ENCODE measurements at regions of chr2 and their contacts with region 1.

Region 1: GRCh38 chr2:20539133-20539719 is 92.4 kb downstream of the RHOB start:
- DNase-seq: peak; percentile 67
- ATAC-seq: peak; percentile 1
- H3K4me3 ChIP-seq: peak overlapping the region in 1 of 3 experiments; percentile 59; a peak in 1 of 6 replicates
- H3K27ac ChIP-seq: peak overlapping the region; percentile 97
- H3K4me1 ChIP-seq: peaks cover 82% of the 10 kb centered on the region
- H3K27me3 ChIP-seq: no peaks in the 10 kb centered on the region
- CTCF ChIP-seq: no peak
- EP300 ChIP-seq: no peak
- POLR2A ChIP-seq: no peak
- RAD21 ChIP-seq: no peak

Region 2: GRCh38 chr2:20507166-20507692 is 32.0 kb before region 1 on chr2:
- CTCF ChIA-PET with region 1: no interaction called
- POLR2A ChIA-PET with region 1: interaction called, 21 read pairs
- in situ Hi-C with region 1: no loop called
- intact Hi-C with region 1: no loop called
- DNase-seq: no peak
- ATAC-seq: peak; percentile 55
- H3K4me3 ChIP-seq: no peak overlapping the region
- H3K27ac ChIP-seq: peak overlapping the region; percentile 14
- H3K4me1 ChIP-seq: peaks cover 71% of the 10 kb centered on the region
- H3K27me3 ChIP-seq: no peaks in the 10 kb centered on the region
- CTCF ChIP-seq: no peak
- EP300 ChIP-seq: no peak
- POLR2A ChIP-seq: no peak
- RAD21 ChIP-seq: no peak

Region 3: GRCh38 chr2:20561701-20562454 is 22.7 kb after region 1 on chr2:
- CTCF ChIA-PET with region 1: no interaction called
- POLR2A ChIA-PET with region 1: interaction called, 10 read pairs
- in situ Hi-C with region 1: no loop called
- intact Hi-C with region 1: no loop called
- DNase-seq: no peak
- ATAC-seq: no peak
- H3K4me3 ChIP-seq: no peak overlapping the region
- H3K27ac ChIP-seq: no peak overlapping the region
- H3K4me1 ChIP-seq: peaks cover 55% of the 10 kb centered on the region
- H3K27me3 ChIP-seq: no peaks in the 10 kb centered on the region
- CTCF ChIP-seq: no peak
- EP300 ChIP-seq: no peak
- POLR2A ChIP-seq: no peak
- RAD21 ChIP-seq: no peak

Region 4: GRCh38 chr2:20584637-20585321 is 45.6 kb after region 1 on chr2:
- CTCF ChIA-PET with region 1: no interaction called
- POLR2A ChIA-PET with region 1: interaction called, 215 read pairs
- in situ Hi-C with region 1: no loop called
- intact Hi-C with region 1: loop called (anchors 1 kb)
- DNase-seq: peak; percentile 98
- ATAC-seq: peak; percentile 79
- H3K4me3 ChIP-seq: peak overlapping the region in 1 of 3 experiments; percentile 52; a peak in 2 of 6 replicates
- H3K27ac ChIP-seq: peak overlapping the region; percentile 97
- H3K4me1 ChIP-seq: peaks cover 100% of the 10 kb centered on the region
- H3K27me3 ChIP-seq: no peaks in the 10 kb centered on the region
- CTCF ChIP-seq: peak; percentile 41; the same call in 1 of the 2 replicates
- EP300 ChIP-seq: peak; percentile 63 to 88; a peak in 3 of 4 replicates
- POLR2A ChIP-seq: peak in 1 of 2 experiments; percentile 73; a peak in 1 of 4 replicates
- RAD21 ChIP-seq: peak; percentile 58

Region 5: DNA sequence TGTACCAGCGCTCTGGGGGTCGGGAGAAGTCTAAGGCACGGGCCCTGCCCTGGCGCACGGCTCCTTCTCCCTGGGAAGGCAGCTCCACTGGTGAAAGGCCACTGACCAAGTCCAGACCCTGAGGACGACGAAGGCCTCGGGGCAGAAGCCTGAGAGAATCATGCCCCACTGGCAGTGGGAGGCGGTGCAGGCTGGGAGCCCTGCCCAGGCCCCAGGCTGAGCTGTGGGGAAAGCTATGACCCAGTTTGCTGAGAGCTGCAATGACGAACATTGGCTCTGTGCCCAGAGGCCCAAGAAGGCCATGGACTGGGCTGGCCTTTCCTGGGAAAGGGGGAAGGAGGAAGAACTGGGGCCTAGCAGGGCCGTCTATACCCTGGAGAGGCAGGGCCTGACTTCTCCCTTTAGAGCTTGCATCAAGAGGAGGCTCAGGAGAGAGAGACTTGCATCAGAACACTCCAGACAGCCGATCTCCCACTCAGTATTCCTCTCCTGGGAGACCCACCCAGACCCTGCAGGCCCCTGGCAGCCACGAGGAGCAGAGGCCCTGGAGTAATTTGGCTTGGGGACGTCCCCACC is 78.8 kb after region 1 on chr2:
- CTCF ChIA-PET with region 1: no interaction called
- POLR2A ChIA-PET with region 1: interaction called, 21 read pairs
- in situ Hi-C with region 1: no loop called
- intact Hi-C with region 1: no loop called
- DNase-seq: peak; percentile 94
- ATAC-seq: peak; percentile 92
- H3K4me3 ChIP-seq: no peak overlapping the region
- H3K27ac ChIP-seq: peak overlapping the region; percentile 95
- H3K4me1 ChIP-seq: peaks cover 63% of the 10 kb centered on the region
- H3K27me3 ChIP-seq: no peaks in the 10 kb centered on the region
- CTCF ChIP-seq: peak; percentile 60
- EP300 ChIP-seq: peak; percentile 49 to 56; a peak in 2 of 4 replicates
- POLR2A ChIP-seq: peak in 1 of 2 experiments; percentile 53; a peak in 1 of 4 replicates
- RAD21 ChIP-seq: peak; percentile 92

Region 6: GRCh38 chr2:20642055-20642971 is 103.1 kb after region 1 on chr2:
- CTCF ChIA-PET with region 1: no interaction called
- POLR2A ChIA-PET with region 1: no interaction called
- in situ Hi-C with region 1: no loop called
- intact Hi-C with region 1: no loop called
- DNase-seq: peak; percentile 64
- ATAC-seq: peak; percentile 98
- H3K4me3 ChIP-seq: no peak overlapping the region
- H3K27ac ChIP-seq: no peak overlapping the region
- H3K4me1 ChIP-seq: peaks cover 7% of the 10 kb centered on the region
- H3K27me3 ChIP-seq: no peaks in the 10 kb centered on the region
- CTCF ChIP-seq: peak; percentile 99
- EP300 ChIP-seq: peak in 1 of 2 experiments; percentile 49; a peak in 1 of 4 replicates
- POLR2A ChIP-seq: no peak
- RAD21 ChIP-seq: peak; percentile 100

Region 7: DNA sequence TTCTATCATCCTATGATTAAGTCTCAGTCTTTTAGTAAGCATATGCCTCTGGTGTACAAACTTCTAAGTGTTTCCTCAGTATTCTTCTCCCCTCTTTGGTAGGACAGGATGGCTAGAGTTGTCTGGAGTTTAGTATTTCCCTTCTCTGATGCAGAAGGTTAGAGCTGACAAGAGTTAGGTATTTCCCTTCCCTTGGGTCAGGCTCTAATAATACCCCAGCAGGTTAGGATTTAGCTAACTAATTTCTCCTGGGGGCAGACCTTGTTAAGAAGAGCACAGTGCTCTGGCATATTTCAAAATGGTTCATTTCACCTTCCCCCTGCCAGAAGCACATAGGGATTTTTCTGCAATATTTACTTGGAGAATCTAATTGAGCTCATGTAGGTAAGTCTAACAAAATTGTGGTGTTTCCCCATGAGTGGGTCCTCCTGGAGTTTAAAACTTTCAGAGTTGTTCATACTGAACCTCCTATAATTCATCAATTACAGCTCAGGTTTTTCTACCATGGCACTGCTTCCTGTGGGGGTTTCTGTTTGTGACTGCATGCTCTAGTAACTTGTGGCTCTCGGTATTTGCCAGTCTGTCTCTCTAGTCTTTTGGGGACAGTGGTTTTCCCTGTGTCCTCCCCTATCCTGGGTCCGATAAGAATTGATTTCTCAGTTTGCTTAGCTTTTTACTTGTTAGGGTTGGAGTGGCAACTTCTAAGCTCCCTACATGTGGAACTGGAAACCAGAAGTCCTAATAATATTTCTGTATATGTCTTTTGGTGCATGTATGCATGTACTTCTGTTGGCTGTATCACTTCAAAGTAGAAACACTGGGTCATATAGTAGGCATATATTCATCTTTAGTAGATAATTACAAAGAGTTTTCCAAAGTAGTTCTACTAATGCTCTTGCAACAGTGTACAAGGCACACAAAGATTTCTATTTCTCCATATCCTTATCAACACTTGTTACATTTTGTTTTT is 205.4 kb after region 1 on chr2:
- CTCF ChIA-PET with region 1: no interaction called
- POLR2A ChIA-PET with region 1: no interaction called
- in situ Hi-C with region 1: no loop called
- intact Hi-C with region 1: no loop called
- DNase-seq: no peak
- ATAC-seq: no peak
- H3K4me3 ChIP-seq: no peak overlapping the region
- H3K27ac ChIP-seq: no peak overlapping the region
- H3K4me1 ChIP-seq: peaks cover 11% of the 10 kb centered on the region
- H3K27me3 ChIP-seq: no peaks in the 10 kb centered on the region
- CTCF ChIP-seq: no peak
- EP300 ChIP-seq: no peak
- POLR2A ChIP-seq: no peak
- RAD21 ChIP-seq: no peak